ENCODE measurements at regions of chr16 and their contacts with region 1.

Region 1: DNA sequence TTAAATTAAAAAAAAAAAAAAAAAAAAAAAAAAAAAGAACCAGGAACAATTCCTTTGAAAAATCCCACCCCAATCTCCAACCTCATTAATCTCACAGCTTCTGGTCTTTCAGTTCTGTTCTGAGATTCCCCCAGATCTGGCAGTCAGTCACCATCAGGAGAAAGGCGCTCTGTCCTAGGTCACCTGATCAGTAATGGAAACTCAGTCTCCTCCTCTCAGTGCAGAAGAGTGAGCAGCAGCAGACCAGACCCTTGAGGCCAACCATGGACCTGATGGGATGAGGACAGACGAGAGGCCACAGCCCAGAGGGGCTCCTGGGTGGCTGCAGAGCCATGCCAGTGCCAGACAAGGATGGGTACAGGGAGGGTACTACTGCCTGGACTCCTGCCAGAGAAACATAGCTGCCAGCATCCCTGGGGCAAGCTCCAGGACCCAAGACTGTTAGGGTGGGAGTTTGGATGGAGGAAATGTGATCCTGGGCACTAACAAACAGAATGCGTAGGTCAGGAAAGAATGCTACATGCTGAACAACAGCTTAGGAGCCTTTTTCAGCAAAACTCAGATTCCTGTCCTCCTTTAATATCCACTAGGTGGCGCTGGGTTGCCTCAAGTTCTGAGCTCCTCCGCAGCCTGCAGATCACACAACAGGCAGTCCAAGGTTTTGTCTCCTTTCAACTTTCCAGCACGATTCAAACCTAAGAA is 28.7 kb downstream of the MPG start:
- DNase-seq: peak; percentile 71 to 86
- ATAC-seq: peak; percentile 84 to 93
- H3K4me3 ChIP-seq: no peak overlapping the region
- H3K27ac ChIP-seq: peak overlapping the region in 1 of 2 experiments; percentile 48; a peak in 2 of 6 replicates
- H3K4me1 ChIP-seq: peaks cover 5% of the 10 kb centered on the region; the same call in 2 of the 3 replicates
- CTCF ChIP-seq: peak; percentile 85
- EP300 ChIP-seq: no peak
- POLR2A ChIP-seq: no peak
- RAD21 ChIP-seq: peak; percentile 76 to 83

Region 2: DNA sequence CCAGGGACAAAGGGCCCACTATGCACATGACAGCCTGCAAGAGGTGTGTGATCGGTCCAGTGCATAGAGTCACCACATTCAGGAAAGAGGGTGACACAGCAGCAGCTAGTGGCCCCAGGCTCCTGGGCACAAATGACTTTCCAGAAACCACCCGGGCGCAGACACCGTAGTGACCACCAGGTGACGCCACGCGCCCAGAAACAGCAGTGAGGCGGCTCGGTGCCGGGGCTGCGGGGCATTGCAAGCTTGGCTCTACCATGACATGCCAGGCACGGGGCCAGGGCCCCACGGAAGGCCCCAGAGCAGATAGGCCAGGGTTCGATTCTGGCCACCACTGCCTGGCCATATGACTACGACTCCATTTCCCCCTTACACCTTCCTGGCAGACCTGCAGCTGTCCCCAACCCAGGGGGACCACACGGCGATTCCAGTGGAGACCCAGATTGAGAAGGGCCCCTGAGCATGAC is 41.1 kb before region 1 on chr16:
- CTCF ChIA-PET with region 1: interaction called, 85 read pairs
- POLR2A ChIA-PET with region 1: no interaction called
- DNase-seq: peak; percentile 79 to 90
- ATAC-seq: peak; percentile 76 to 89
- H3K4me3 ChIP-seq: no peak overlapping the region
- H3K27ac ChIP-seq: no peak overlapping the region
- H3K4me1 ChIP-seq: no peaks in the 10 kb centered on the region; the same call in 2 of the 3 replicates
- CTCF ChIP-seq: peak; percentile 92
- EP300 ChIP-seq: no peak
- POLR2A ChIP-seq: no peak
- RAD21 ChIP-seq: peak; percentile 97 to 98

Region 3: GRCh38 chr16:84718-85406 is 21.9 kb before region 1 on chr16:
- CTCF ChIA-PET with region 1: interaction called, 11 read pairs
- POLR2A ChIA-PET with region 1: no interaction called
- DNase-seq: no peak
- ATAC-seq: peak; percentile 14 to 36; a peak in 5 of 6 replicates
- H3K4me3 ChIP-seq: no peak overlapping the region
- H3K27ac ChIP-seq: peak overlapping the region in 1 of 2 experiments; percentile 60; a peak in 3 of 6 replicates
- H3K4me1 ChIP-seq: peaks cover 10% of the 10 kb centered on the region
- CTCF ChIP-seq: no peak
- EP300 ChIP-seq: no peak
- POLR2A ChIP-seq: no peak
- RAD21 ChIP-seq: no peak

Region 4: GRCh38 chr16:129075-129474 is 22.3 kb after region 1 on chr16:
- CTCF ChIA-PET with region 1: interaction called, 23 read pairs
- POLR2A ChIA-PET with region 1: no interaction called
- DNase-seq: no peak
- ATAC-seq: no peak
- H3K4me3 ChIP-seq: no peak overlapping the region
- H3K27ac ChIP-seq: no peak overlapping the region
- H3K4me1 ChIP-seq: no peaks in the 10 kb centered on the region
- CTCF ChIP-seq: no peak
- EP300 ChIP-seq: no peak
- POLR2A ChIP-seq: no peak
- RAD21 ChIP-seq: no peak

Region 5: GRCh38 chr16:159136-159849 is 52.5 kb after region 1 on chr16:
- CTCF ChIA-PET with region 1: interaction called, 10 read pairs
- POLR2A ChIA-PET with region 1: no interaction called
- DNase-seq: no peak
- ATAC-seq: peak; percentile 22 to 27; a peak in 4 of 6 replicates
- H3K4me3 ChIP-seq: no peak overlapping the region
- H3K27ac ChIP-seq: no peak overlapping the region
- H3K4me1 ChIP-seq: 0 out of 3 replicates have a peak, but pooled peaks cover 5% of the 10 kb centered on the region
- CTCF ChIP-seq: no peak
- EP300 ChIP-seq: no peak
- POLR2A ChIP-seq: no peak
- RAD21 ChIP-seq: no peak

Region 6: DNA sequence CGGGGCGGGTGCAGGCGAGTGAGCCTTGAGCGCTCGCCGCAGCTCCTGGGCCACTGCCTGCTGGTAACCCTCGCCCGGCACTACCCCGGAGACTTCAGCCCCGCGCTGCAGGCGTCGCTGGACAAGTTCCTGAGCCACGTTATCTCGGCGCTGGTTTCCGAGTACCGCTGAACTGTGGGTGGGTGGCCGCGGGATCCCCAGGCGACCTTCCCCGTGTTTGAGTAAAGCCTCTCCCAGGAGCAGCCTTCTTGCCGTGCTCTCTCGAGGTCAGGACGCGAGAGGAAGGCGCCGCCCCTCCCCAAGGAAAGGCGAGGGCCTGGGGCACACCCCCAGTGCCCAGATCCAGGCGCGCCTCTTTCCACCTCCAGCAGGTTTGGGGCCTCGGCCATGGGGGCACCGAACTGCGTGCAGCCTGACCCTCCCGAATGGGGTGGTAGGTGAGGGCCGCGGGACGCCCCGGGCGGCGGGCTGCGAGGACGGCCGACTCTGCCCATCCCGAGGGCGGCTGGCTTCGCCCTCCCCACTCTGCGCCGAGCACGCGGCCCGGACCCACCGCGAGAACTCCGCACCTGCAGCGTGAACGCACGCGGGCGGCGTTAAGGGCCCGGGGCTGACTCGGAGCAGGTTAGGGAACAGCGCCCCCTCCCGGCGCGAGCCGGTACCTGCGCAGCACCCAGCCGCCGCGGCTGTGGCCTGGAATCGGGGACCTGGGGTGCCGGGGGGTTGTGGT is 74.3 kb after region 1 on chr16:
- CTCF ChIA-PET with region 1: interaction called, 104 read pairs
- POLR2A ChIA-PET with region 1: interaction called, 7 read pairs
- DNase-seq: peak; percentile 88
- ATAC-seq: peak; percentile 71 to 78
- H3K4me3 ChIP-seq: peak overlapping the region; percentile 48
- H3K27ac ChIP-seq: peak overlapping the region; percentile 56 to 82; a peak in 5 of 6 replicates
- H3K4me1 ChIP-seq: peaks cover 9% of the 10 kb centered on the region; the same call in 1 of the 3 replicates
- CTCF ChIP-seq: peak; percentile 90
- EP300 ChIP-seq: no peak
- POLR2A ChIP-seq: no peak
- RAD21 ChIP-seq: peak; percentile 60 to 83

Measured in A549 (cell line).